ENCODE measurements at regions of chr18 and their contacts with region 1.

Region 1: DNA sequence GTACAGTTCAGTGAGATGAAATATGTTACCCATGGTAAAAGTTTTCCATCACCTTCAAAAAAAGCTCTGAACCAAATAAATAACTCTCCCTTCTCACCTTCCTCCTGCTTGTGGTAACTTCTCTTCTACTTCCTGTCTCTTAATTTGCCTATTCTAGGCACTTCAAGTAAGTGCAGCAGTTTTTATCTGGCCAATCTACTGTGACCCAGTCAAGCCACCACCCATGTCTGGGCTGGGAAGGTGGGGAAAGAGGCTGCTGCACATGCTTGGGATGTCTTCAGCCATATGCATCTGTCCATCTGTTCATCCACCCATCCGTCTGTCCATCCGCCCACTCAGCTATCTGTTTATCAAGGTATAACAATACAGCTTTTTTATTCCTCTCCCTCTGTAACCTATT is 31.6 kb downstream of the ZNF532 start:
- DNase-seq: peak; percentile 70
- H3K4me3 ChIP-seq: peak overlapping the region; percentile 68
- H3K27ac ChIP-seq: peak overlapping the region; percentile 87
- H3K4me1 ChIP-seq: peaks cover 35% of the 10 kb centered on the region
- CTCF ChIP-seq: no peak

Region 2: GRCh38 chr18:58966005-58966677 is 69.9 kb after region 1 on chr18:
- CTCF ChIA-PET with region 1: no interaction called
- POLR2A ChIA-PET with region 1: no interaction called
- intact Hi-C with region 1: loop called (anchors 2 kb)
- DNase-seq: peak; percentile 24
- H3K4me3 ChIP-seq: peak overlapping the region; percentile 54
- H3K27ac ChIP-seq: peak overlapping the region; percentile 83
- H3K4me1 ChIP-seq: peaks cover 64% of the 10 kb centered on the region
- CTCF ChIP-seq: no peak

Region 3: GRCh38 chr18:59056706-59057492 is 160.6 kb after region 1 on chr18:
- CTCF ChIA-PET with region 1: no interaction called
- POLR2A ChIA-PET with region 1: no interaction called
- intact Hi-C with region 1: loop called (anchors 10 kb)
- DNase-seq: peak; percentile 73
- H3K4me3 ChIP-seq: no peak overlapping the region
- H3K27ac ChIP-seq: no peak overlapping the region
- H3K4me1 ChIP-seq: no peaks in the 10 kb centered on the region
- CTCF ChIP-seq: peak; percentile 81